ENCODE measurements at regions of chr3 and their contacts with region 1.

Region 1: DNA sequence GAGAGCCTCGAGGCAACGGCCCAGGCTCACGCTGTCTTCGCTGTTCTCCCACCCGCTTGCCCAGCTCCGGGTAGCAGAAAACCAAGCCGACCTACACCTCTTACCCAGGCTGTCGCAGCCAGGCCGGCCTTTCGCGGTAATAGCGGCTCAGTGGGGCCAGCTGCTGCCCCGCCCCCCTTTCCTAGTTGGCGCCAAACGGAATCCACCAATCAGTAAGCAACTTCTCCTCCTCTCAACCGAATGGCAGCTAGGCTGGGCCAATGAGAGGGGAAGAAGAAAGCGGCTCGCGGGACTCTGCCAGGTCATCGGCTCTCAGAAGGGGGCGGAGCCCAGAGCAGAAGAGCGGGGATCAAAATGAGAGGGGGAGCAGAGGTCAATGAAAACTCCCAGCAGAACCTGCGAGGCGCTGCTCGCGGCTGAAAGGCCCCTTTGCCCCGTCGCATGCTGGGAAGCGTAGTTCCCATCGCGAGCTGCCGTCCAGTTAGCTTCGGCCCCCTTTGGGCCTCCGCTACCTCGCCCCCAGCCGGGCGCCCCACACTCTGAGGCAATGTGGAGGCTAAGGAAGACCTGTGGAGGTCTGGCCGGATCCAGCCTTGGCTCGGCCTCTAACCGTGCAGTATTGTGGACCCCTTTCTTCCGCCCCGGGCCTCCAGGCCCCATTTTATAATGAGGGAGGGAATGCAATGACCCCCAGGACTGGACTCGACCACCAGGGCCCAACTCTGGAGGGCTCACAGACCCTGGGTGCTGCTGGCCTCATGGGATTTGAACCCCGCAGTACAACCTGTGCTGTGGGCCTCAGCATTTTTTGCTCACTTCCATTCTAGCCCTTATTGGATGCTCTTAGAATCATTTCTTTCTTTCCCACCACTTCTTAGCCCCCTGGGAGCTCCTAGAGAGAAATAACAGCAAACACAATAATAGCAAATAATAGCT is at the start of gene CDC25A:
- DNase-seq: peak; percentile 96

Region 2: DNA sequence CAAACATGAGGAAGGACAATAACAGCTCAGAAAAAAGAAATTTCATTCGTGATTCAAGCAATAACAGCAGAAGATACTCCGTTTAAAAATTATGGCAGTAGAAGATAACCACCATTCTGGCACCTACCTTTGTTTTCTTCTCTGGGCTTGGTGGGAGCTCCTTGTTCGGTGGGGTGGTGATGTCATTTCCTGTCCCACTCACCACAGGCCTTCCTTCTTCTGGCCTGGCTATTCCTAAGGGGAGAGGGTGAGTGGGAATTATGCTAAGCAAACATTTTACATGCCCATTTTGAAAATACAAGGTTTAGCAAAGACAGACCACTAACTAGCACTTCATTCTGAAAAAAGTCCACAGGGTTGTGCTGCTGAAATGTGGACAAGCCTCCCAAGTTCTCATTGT is 311.2 kb before region 1 on chr3:
- CTCF ChIA-PET with region 1: no interaction called
- POLR2A ChIA-PET with region 1: no interaction called
- DNase-seq: no peak

Region 3: DNA sequence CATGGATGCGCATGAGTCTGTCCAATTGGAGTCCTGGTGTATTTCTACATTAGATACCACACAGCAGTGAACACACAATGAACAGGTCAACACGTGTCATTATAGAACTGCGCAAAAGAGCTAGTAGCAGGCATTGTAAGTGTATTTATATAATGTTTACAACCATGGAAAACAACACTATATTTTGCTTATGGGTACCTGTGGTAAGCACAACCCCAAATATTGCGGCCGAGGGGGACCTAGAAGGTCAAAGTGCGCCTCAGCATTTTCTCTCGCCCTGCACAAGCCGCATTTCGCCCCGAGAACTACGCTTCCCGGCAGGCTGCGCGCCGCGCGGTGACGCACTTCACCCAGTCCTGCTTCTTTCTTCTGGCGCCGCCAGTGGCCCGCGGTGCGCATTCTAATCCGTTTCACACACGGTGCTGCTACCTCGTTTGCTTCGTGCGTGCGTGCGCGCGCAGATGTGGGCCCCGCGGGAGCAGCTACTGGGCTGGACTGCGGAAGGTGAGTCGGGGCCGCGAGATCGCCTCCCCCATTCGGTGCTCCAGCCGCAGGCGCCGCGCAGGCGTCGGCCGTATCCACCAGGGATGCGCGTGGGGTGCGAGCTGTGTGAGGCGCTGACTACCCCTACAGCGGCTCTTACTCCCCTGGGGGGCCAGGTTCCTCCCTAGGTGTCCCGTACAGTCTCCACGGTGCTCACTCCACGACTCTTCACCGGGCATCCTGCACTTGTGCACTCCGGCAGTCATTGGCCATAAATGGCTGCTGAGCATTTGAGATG is 52.4 kb after region 1 on chr3 and contains the start of gene ZNF589:
- CTCF ChIA-PET with region 1: no interaction called
- POLR2A ChIA-PET with region 1: interaction called, 26 read pairs
- DNase-seq: peak; percentile 92